ENCODE measurements at regions of chrX and their contacts with region 1.

Region 1: DNA sequence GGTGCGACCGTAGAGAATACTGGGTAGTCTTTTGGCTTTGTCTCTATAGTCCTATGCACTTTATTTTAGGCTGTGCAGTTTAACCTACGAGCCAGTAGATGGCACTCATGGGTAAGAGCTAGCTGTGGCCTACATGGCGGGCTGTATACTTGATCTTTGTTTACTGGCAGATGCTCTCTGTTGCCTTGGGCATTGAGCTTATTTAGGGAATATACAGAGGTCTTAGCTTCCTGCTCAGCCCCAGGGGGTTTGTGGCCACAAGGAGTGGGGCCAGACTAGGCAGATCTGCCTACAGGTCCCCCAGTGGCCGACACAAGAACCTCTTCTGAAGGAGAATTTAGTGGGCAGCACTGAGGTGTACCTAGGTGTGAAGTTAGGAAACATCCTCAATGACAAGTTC is 227.6 kb upstream of the HDX start:
- H3K4me3 Mint-ChIP-seq: no peak overlapping the region
- H3K27ac Mint-ChIP-seq: no peak overlapping the region
- H3K4me1 Mint-ChIP-seq: peaks cover 7% of the 10 kb centered on the region
- H3K27me3 Mint-ChIP-seq: peaks cover 4% of the 10 kb centered on the region

Region 2: DNA sequence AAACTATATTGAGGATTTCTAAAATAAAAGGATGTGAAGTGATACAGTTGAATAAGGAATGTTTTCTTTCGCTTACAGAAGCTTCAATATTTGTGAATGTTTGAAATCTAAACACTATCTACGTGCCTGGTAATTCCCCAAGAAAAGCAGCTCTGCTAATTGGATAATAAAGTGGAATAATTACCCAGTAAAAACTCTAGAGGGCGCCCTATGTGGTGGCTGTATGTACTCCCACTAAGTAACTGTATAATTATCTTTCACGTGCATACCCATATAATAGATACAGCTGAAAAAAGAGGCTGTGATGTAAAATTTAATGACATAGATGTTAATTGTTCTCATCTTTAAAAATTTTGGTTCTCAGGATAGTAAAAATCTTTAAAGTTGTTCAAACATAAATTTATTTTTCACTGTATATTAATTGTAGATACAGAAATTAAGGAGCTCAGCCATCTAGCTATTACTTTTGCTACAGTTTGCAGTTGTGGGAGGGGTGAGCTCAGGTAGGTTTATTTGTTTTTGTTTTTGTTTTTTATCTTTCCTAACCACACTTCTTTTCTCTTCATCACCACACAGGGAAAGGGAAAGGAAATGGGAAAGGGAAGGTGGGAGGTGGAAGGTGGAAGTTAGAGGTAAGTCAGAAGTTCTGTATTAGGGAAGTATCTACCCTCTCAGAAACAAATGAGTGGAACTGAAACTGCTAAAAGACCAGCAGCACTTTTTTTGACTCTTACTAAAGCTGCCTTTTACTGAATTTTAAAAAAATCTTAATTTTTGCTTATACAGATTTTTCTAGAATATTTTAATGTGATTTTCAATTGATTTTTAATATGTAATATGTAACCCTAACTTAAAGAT is 390.1 kb before region 1 on chrX:
- intact Hi-C with region 1: loop called (anchors 10 kb)
- H3K4me3 Mint-ChIP-seq: peak overlapping the region; percentile 23
- H3K27ac Mint-ChIP-seq: no peak overlapping the region
- H3K4me1 Mint-ChIP-seq: peaks cover 29% of the 10 kb centered on the region
- H3K27me3 Mint-ChIP-seq: peaks cover 2% of the 10 kb centered on the region

Region 3: GRCh38 chrX:84907324-84907968 is 177.6 kb after region 1 on chrX:
- intact Hi-C with region 1: loop called (anchors 5 kb)
- H3K4me3 Mint-ChIP-seq: no peak overlapping the region
- H3K27ac Mint-ChIP-seq: no peak overlapping the region
- H3K4me1 Mint-ChIP-seq: no peaks in the 10 kb centered on the region
- H3K27me3 Mint-ChIP-seq: no peaks in the 10 kb centered on the region

Region 4: DNA sequence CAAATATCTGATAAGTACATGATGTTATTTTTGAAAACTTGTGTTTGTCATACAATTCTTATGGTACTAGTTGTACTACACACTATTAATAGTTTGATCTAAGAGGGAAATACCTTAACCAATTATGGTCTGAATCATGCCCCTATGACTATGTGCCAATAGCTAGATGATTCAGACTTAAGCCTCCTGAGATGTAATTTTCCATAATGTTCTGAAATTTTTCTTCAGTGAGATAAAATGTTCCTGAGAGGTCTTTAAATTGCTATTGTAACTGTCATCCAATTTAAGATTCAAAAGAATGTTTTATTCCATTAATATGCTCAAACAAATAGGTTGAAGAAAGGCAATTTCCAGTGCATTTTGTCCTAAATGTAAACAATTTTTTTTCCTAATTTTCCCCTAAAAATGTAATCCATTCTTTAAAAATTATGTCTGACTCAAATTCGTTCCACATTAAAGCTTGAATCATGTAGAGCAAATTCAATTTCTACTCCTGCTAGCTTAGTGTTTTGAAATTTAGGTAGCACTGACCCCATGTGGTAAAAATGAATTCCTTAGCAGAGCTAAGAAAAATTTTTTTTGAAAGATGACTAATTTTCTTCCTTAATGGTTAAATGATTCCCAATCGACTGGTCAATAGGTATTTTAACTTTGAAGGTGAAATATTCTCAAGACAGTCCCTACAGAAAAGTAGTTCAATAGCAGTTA is 323.0 kb after region 1 on chrX:
- intact Hi-C with region 1: loop called (anchors 10 kb)
- H3K4me3 Mint-ChIP-seq: no peak overlapping the region
- H3K27ac Mint-ChIP-seq: no peak overlapping the region
- H3K4me1 Mint-ChIP-seq: no peaks in the 10 kb centered on the region
- H3K27me3 Mint-ChIP-seq: no peaks in the 10 kb centered on the region

Measured in dendritic cell treated with granulocyte-macrophage colony-stimulating factor and Interleukin-4, amounts not matched to agents 40 ng/mL and 50 ng/mL, for 4 days (primary cell).